H1 (cell line): ENCODE measurements at regions of chrX and their contacts with region 1.

Region 1: GRCh38 chrX:72201836-72202536 is 20.4 kb downstream of the PIN4 start:
- DNase-seq: no peak
- H3K4me3 ChIP-seq: peak overlapping the region in 1 of 4 experiments; percentile 21; a peak in 1 of 8 replicates
- H3K27ac ChIP-seq: peak overlapping the region; percentile 36
- H3K4me1 ChIP-seq: peaks cover 0 to 10% (median 7%) of the 10 kb centered on the region in 4 experiments; a peak in 3 of 7 replicates
- H3K27me3 ChIP-seq: no peaks in the 10 kb centered on the region
- CTCF ChIP-seq: no peak
- EP300 ChIP-seq: no peak
- POLR2A ChIP-seq: no peak
- RAD21 ChIP-seq: no peak

Region 2: GRCh38 chrX:72181178-72182125 is 20.5 kb before region 1 on chrX and contains the start of gene PIN4:
- CTCF ChIA-PET with region 1: no interaction called
- POLR2A ChIA-PET with region 1: interaction called, 13 read pairs
- DNase-seq: peak; percentile 78 to 91
- H3K4me3 ChIP-seq: peak within 1 kb of the TSS; percentile 69 to 95 (median 74)
- H3K27ac ChIP-seq: peak within 1 kb of the TSS; percentile 92
- H3K4me1 ChIP-seq: peaks cover 0 to 5% (median 0%) of the 10 kb centered on the region in 4 experiments; a peak in 1 of 7 replicates
- H3K27me3 ChIP-seq: no peaks in the 10 kb centered on the region
- CTCF ChIP-seq: no peak
- EP300 ChIP-seq: no peak
- POLR2A ChIP-seq: peak; percentile 41 to 86; a peak in 2 of 3 replicates
- RAD21 ChIP-seq: no peak
- total RNA-seq, gene PIN4: 9.4 and 11.7 TPM in 2 replicates

Region 3: GRCh38 chrX:72238721-72239475 is 36.9 kb after region 1 on chrX and contains the start of gene ERCC6L:
- CTCF ChIA-PET with region 1: interaction called, 7 read pairs
- POLR2A ChIA-PET with region 1: interaction called, 10 read pairs
- DNase-seq: peak; percentile 72 to 84
- H3K4me3 ChIP-seq: peak within 1 kb of the TSS; percentile 69 to 84 (median 74)
- H3K27ac ChIP-seq: peak within 1 kb of the TSS; percentile 20; the same call in 1 of the 2 replicates
- H3K4me1 ChIP-seq: no peaks in the 10 kb centered on the region; a peak in 1 of 7 replicates
- H3K27me3 ChIP-seq: no peaks in the 10 kb centered on the region
- CTCF ChIP-seq: no peak
- EP300 ChIP-seq: no peak
- POLR2A ChIP-seq: peak; percentile 76 to 93
- RAD21 ChIP-seq: no peak
- total RNA-seq, gene ERCC6L: 23.9 and 24.7 TPM in 2 replicates

Region 4: GRCh38 chrX:72282302-72282701 is 80.3 kb after region 1 on chrX:
- CTCF ChIA-PET with region 1: no interaction called
- POLR2A ChIA-PET with region 1: no interaction called
- DNase-seq: no peak
- H3K4me3 ChIP-seq: no peak overlapping the region
- H3K27ac ChIP-seq: no peak overlapping the region
- H3K4me1 ChIP-seq: no peaks in the 10 kb centered on the region
- H3K27me3 ChIP-seq: no peaks in the 10 kb centered on the region
- CTCF ChIP-seq: no peak
- EP300 ChIP-seq: no peak
- POLR2A ChIP-seq: no peak
- RAD21 ChIP-seq: no peak